ENCODE measurements at regions of chr10 and their contacts with region 1.

Region 1: DNA sequence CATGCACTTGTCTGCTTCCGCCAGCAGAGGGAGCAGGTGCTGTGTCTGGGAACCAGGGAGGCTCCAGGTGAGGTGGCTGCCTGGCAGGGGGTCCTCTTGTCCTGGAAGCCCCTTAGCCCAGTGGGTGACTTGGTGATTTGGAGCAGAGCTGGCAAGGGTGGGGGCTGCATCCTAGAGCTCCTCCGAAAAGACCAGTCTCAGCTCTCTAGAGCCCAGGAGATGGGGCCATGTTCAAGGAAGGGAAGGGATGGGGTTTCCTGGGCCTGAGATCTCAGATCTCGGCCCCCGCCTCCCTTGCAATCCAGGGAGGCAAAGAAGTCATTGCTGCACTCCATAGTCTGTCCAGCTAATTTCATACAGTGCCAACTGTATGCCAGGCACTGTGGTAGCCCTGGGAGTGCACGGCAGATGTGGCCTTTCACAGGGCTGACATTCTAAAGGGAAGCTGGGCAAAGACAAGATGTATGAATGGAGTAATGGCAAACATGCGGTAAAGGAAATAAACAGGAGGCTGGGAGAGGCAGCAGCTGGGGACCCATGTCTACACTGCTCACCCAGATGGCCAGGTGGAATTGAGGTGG is 20.4 kb upstream of the SFRP5 start:
- DNase-seq: peak; percentile 81
- ATAC-seq: peak; percentile 64
- H3K4me3 Mint-ChIP-seq: no peak overlapping the region
- H3K27ac Mint-ChIP-seq: peak overlapping the region; percentile 53
- H3K4me1 Mint-ChIP-seq: peaks cover 41% of the 10 kb centered on the region
- H3K27me3 Mint-ChIP-seq: peaks cover 2% of the 10 kb centered on the region

Region 2: GRCh38 chr10:97780841-97781617 is 11.2 kb before region 1 on chr10:
- CTCF ChIA-PET with region 1: interaction called, 46 read pairs
- POLR2A ChIA-PET with region 1: interaction called, 7 read pairs
- DNase-seq: no peak
- ATAC-seq: peak; percentile 25
- H3K4me3 Mint-ChIP-seq: peak overlapping the region; percentile 58
- H3K27ac Mint-ChIP-seq: peak overlapping the region; percentile 96
- H3K4me1 Mint-ChIP-seq: peaks cover 33% of the 10 kb centered on the region
- H3K27me3 Mint-ChIP-seq: no peaks in the 10 kb centered on the region

Region 3: GRCh38 chr10:97849687-97850402 is 57.6 kb after region 1 on chr10 and contains the start of gene GOLGA7B:
- CTCF ChIA-PET with region 1: interaction called, 40 read pairs
- POLR2A ChIA-PET with region 1: interaction called, 4 read pairs
- DNase-seq: peak; percentile 80
- ATAC-seq: peak; percentile 85
- H3K4me3 Mint-ChIP-seq: peak within 1 kb of the TSS; percentile 84
- H3K27ac Mint-ChIP-seq: peak within 1 kb of the TSS; percentile 83
- H3K4me1 Mint-ChIP-seq: peaks cover 37% of the 10 kb centered on the region
- H3K27me3 Mint-ChIP-seq: no peaks in the 10 kb centered on the region
- total RNA-seq, gene GOLGA7B: 10.4 to 11.0 TPM

Region 4: GRCh38 chr10:97861097-97861750 is 69.0 kb after region 1 on chr10:
- CTCF ChIA-PET with region 1: interaction called, 222 read pairs
- POLR2A ChIA-PET with region 1: interaction called, 3 read pairs
- DNase-seq: no peak
- ATAC-seq: no peak
- H3K4me3 Mint-ChIP-seq: no peak overlapping the region
- H3K27ac Mint-ChIP-seq: no peak overlapping the region
- H3K4me1 Mint-ChIP-seq: peaks cover 42% of the 10 kb centered on the region
- H3K27me3 Mint-ChIP-seq: no peaks in the 10 kb centered on the region

Region 5: GRCh38 chr10:98285416-98285815 is 493.2 kb after region 1 on chr10:
- CTCF ChIA-PET with region 1: no interaction called
- POLR2A ChIA-PET with region 1: no interaction called
- DNase-seq: no peak
- ATAC-seq: no peak
- H3K4me3 Mint-ChIP-seq: no peak overlapping the region
- H3K27ac Mint-ChIP-seq: no peak overlapping the region
- H3K4me1 Mint-ChIP-seq: no peaks in the 10 kb centered on the region
- H3K27me3 Mint-ChIP-seq: peaks cover 16% of the 10 kb centered on the region